Cardiac septum (tissue), 1 donor: ENCODE measurements at regions of chr6 and their contacts with region 1.

Region 1: DNA sequence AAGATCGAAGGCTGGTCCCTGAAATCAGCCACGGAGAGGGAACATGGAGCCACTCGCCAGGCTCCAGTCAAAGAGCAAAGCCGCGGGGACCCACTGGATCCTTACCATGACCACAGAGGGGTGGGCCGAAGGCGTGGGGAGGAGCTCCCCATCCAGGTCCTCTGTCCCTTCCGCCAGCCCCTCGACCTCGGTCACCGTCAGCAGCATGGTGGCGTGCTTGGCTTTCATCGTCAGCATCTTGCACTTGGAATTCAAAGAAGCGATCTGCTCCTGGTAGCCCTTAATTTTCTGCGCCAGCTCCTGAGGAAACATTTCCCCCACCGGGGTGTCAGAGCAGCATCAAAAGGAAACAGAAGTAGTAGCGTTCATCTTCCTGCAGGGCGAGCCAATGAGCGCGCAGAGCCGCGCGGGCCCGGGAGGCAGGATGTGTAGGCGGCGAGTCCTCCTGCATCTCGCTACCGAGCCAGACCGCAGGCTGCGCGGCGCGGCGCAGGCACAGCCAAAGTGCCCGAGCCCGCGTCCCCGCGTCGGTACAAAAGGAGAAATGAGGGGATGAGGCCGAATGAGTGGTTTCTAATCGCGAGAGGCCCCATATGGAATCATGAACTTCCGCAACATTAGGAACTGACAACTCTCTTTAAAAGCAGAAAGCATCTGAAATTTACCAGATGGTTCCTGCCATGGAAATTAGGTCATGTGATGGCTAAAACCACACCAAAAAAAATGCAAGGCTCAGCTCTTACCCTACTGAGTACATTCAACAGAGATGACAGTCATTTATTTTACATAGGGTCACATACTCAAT is 335.2 kb downstream of the SYNE1 start:
- DNase-seq: peak; percentile 93

Region 2: GRCh38 chr6:152338335-152339125 is 36.6 kb after region 1 on chr6:
- intact Hi-C with region 1: loop called (anchors 2 kb)
- DNase-seq: no peak